Activated CD8-positive, alpha-beta T cell treated with anti-CD3 and anti-CD28 coated beads, Interleukin-2, amount 10 ng/mL, durations not matched to agents 7 days and 5 days (primary cell): ENCODE measurements at regions of chr3 and their contacts with region 1.

Region 1: DNA sequence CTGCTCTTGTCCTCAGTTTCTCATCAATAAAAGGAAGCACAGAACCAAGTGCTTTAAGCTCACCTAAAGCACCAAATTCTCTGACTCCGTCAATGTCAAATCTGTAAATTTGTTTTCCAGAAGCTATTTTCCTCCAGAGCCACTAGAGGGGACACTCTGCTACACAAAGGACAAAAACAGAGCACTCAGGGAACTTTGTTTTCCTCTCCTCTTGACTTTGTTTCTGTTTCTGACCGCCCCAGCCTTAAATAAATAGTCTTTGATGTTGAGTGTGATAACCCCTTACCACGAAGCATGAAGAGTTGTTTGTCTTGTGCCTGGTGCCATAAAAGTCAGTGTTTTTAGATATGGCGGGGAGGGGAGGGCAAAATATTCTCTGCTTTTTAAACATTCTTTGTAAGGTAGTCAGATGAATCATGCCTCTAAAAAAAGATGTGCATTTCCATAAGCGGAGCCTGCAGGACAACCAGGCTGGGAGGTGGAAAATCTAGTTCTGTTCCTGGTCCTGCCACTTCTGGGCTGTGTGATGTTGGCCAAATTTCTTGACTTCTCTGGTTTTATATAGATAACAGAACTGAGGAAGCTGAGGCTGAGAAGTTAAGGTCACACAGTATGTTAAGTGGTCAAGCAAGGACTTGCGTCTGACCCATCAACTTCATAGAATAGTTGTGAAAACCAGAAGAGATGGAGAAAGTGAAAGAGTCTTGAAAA is 7.3 kb upstream of the ZBTB38 start:
- DNase-seq: peak; percentile 42
- ATAC-seq: peak; percentile 65
- H3K4me3 Mint-ChIP-seq: no peak overlapping the region
- H3K27ac Mint-ChIP-seq: no peak overlapping the region
- H3K4me1 Mint-ChIP-seq: peaks cover 11% of the 10 kb centered on the region
- H3K27me3 Mint-ChIP-seq: peaks cover 10% of the 10 kb centered on the region

Region 2: GRCh38 chr3:141311496-141312353 is 49.3 kb before region 1 on chr3:
- CTCF ChIA-PET with region 1: interaction called, 55 read pairs
- POLR2A ChIA-PET with region 1: interaction called, 5 read pairs
- DNase-seq: peak; percentile 100
- ATAC-seq: peak; percentile 95
- H3K4me3 Mint-ChIP-seq: peak overlapping the region; percentile 85
- H3K27ac Mint-ChIP-seq: peak overlapping the region; percentile 99
- H3K4me1 Mint-ChIP-seq: peaks cover 57% of the 10 kb centered on the region
- H3K27me3 Mint-ChIP-seq: no peaks in the 10 kb centered on the region

Region 3: GRCh38 chr3:141375381-141376301 is 14.6 kb after region 1 on chr3:
- CTCF ChIA-PET with region 1: interaction called, 26 read pairs
- POLR2A ChIA-PET with region 1: no interaction called
- DNase-seq: no peak
- ATAC-seq: peak; percentile 51
- H3K4me3 Mint-ChIP-seq: no peak overlapping the region
- H3K27ac Mint-ChIP-seq: peak overlapping the region; percentile 85
- H3K4me1 Mint-ChIP-seq: peaks cover 43% of the 10 kb centered on the region
- H3K27me3 Mint-ChIP-seq: no peaks in the 10 kb centered on the region

Region 4: GRCh38 chr3:141412087-141412935 is 51.3 kb after region 1 on chr3:
- CTCF ChIA-PET with region 1: interaction called, 32 read pairs
- POLR2A ChIA-PET with region 1: no interaction called
- DNase-seq: peak; percentile 79
- ATAC-seq: peak; percentile 62
- H3K4me3 Mint-ChIP-seq: peak overlapping the region; percentile 79
- H3K27ac Mint-ChIP-seq: peak overlapping the region; percentile 97
- H3K4me1 Mint-ChIP-seq: peaks cover 68% of the 10 kb centered on the region
- H3K27me3 Mint-ChIP-seq: no peaks in the 10 kb centered on the region

Region 5: DNA sequence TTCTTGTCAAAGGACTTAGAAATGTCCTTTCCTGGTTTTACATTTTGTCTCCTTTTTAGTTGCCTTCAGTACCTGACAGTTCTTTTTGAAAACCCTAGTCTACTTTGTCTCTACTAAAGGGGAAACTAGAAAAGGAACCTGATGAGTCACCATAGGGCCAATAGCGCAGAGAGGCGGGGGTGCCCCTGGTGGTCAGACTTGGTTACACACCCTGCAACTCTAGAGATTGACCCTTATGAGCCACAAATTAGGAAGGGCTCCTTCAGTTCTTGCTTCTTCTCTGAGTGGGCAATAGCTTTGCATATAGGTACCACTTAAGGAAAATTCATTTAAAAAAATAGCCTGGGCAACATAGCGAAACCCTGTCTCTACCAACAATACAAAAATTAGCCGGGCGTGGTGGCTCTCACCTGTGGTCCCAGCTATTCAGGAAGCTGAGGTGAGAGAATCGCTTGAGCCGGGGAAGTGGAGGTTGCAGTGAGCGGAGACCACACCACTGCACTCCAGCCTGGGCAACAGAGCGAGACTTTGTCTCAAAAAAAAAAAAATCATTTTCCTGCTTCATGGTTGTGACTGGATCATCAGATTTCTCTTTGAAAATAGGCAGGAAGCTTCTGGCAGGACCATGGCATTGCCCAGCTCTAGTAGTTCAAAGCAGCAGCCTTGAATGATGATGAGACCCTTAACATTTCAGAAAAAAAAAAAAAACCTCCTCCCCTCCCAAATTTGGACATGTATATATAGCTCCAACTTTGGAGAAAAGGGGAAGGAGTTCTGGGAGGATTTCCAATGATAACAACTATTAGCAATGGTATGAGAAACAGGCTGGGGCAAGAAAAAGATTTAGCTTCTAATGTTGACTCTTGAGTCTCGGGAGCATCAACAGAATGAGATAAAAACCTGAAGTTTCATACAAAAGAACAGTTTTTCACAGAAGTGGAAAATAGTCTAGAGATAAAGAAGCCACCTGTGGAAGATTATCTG is 80.6 kb after region 1 on chr3:
- CTCF ChIA-PET with region 1: interaction called, 89 read pairs
- POLR2A ChIA-PET with region 1: no interaction called
- DNase-seq: peak; percentile 87
- ATAC-seq: peak; percentile 99
- H3K4me3 Mint-ChIP-seq: peak overlapping the region; percentile 20
- H3K27ac Mint-ChIP-seq: peak overlapping the region; percentile 55
- H3K4me1 Mint-ChIP-seq: peaks cover 31% of the 10 kb centered on the region
- H3K27me3 Mint-ChIP-seq: no peaks in the 10 kb centered on the region